Gastrocnemius medialis (tissue), 4 donors: ENCODE measurements at regions of chr7 and their contacts with region 1.

Region 1: GRCh38 chr7:65037740-65038678 is 31.5 kb upstream of the ERV3-1 start:
- DNase-seq: peak; percentile 90 to 92
- ATAC-seq: peak; percentile 89 to 90
- H3K4me3 ChIP-seq: peak overlapping the region; percentile 70 to 93 (median 82)
- H3K27ac ChIP-seq: peak overlapping the region; percentile 87 to 97 (median 95)
- H3K4me1 ChIP-seq: peaks cover 19% of the 10 kb centered on the region in 2 donors
- H3K27me3 ChIP-seq: no peaks in the 10 kb centered on the region
- CTCF ChIP-seq: no peak
- POLR2A ChIP-seq: peak; percentile 56 to 71

Region 2: DNA sequence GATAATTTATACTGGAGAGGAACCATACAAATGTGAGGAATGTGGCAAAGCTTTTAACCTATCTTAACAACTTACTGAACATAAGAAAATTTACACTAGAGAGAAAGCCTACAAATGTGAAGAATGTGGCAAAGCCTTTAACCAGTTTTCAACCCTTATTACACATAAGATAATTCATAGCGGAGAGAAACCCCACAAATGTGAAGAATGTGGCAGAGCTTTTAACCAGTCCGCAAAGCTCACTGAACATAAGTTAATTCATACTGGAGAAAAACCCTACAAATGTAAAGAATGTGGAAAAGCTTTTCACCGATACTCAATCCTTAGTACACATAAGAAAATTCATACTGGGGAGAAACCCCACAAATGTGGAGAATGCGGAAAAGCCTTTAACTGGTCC is 205.9 kb before region 1 on chr7:
- in situ Hi-C with region 1: no loop called
- intact Hi-C with region 1: no loop called
- DNase-seq: no peak
- ATAC-seq: no peak
- H3K4me3 ChIP-seq: no peak overlapping the region
- H3K27ac ChIP-seq: no peak overlapping the region
- H3K4me1 ChIP-seq: no peaks in the 10 kb centered on the region
- H3K27me3 ChIP-seq: no peaks in the 10 kb centered on the region
- CTCF ChIP-seq: no peak
- POLR2A ChIP-seq: no peak

Region 3: DNA sequence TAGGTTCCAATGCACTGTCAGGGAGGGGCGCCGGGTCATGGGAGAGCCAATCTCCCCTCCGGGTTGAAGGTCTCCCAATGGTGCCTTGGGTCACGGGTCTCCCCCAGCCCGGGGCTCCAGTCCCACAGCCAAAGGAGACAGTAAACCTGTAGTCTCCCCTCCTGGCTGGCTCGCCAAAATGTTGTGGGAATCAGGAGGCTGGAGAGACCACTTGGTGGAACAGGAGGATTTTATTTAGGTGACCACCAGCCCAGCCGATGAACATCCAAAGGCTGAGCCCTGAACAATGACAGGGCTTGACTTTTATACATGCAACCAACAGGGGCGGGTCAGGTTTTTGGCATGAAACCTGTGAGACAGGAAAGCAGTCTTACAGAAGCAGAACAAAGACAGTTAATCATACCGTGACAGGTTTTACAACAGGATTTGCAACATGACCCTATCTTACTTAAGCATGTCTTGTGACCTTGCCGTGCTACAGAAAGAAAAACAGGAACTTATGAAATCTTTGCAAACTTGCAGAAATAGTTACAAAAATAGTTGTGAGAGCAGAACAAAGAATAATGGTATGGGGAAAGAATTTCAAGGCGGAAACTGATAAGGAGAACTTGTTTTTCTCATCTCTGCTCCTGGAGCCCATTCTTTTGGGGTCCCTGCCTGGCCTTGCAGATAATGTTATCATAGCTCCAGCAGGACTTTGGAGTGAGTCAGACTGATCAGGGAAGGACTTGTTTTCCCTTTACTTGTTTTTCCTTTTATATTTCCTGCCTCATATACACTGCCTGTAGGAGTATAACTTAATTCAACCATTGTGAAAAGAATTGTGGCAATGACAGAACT is 38.6 kb before region 1 on chr7:
- in situ Hi-C with region 1: no loop called
- intact Hi-C with region 1: loop called (anchors 2 kb)
- DNase-seq: peak; percentile 10 to 72
- ATAC-seq: peak; percentile 76 to 80
- H3K4me3 ChIP-seq: peak overlapping the region in 1 of 4 donors; percentile 27
- H3K27ac ChIP-seq: peak overlapping the region; percentile 59 to 81 (median 73)
- H3K4me1 ChIP-seq: peaks cover 7 to 20% of the 10 kb centered on the region in 2 donors
- H3K27me3 ChIP-seq: no peaks in the 10 kb centered on the region
- CTCF ChIP-seq: no peak
- POLR2A ChIP-seq: peak in 1 of 2 donors; percentile 47

Region 4: DNA sequence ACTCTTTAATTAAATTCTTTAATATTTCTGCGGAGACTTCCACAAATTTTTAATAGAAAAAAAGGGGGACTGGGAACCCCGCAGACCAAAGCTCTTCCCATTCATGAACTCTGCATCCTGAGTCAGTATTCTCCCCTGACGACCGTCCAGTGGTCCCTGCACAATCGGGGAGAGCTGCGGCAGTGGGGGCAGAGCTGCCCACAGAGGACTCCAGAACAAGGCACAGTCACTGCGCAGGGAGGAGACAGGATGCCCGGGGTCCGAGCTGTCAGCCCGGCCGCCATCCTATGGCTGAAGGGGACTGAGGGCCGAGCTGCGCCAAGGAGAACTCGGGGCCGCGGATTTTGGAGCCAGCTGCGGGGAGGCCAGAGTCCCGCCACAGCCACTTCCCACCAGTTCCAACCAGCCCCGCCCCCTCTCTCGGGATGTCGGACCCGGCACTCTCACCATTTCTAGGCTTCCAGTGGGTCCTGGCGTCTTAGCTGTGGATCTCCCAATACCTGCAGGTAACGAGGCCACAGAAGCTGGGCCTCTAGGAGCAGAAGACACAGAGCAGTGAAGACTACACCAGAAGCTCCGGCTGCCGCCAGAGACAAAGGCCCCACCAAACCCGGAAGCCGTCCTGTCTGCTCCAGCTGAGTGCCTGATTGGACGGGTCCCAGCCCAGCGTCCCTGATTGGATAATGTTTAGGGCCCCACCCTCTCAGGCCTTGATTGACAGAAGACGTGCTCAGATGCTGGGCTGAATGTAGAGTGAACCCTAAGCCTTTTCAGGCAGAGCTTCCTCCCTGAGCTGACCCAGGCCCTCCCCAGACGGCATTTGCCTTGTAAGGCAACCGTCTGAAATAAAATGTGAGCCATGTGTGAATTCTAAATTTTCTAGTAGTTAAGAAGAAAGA is 31.7 kb before region 1 on chr7 and contains the start of gene ERV3-1:
- in situ Hi-C with region 1: no loop called
- intact Hi-C with region 1: loop called (anchors 1 kb)
- DNase-seq: peak; percentile 95
- ATAC-seq: peak; percentile 100
- H3K4me3 ChIP-seq: peak within 1 kb of the TSS; percentile 55 to 98 (median 91)
- H3K27ac ChIP-seq: peak within 1 kb of the TSS; percentile 76 to 89 (median 86)
- H3K4me1 ChIP-seq: peaks cover 12 to 18% of the 10 kb centered on the region in 2 donors
- H3K27me3 ChIP-seq: no peaks in the 10 kb centered on the region
- CTCF ChIP-seq: no peak
- POLR2A ChIP-seq: peak; percentile 89 to 90
- total RNA-seq, gene ERV3-1: 0.49 to 3.9 (median 2.9) TPM

Region 5: GRCh38 chr7:65373608-65374351 is 335.8 kb after region 1 on chr7 and contains the start of gene ZNF92:
- in situ Hi-C with region 1: no loop called
- intact Hi-C with region 1: loop called (anchors 5 kb)
- DNase-seq: peak; percentile 95 to 96
- ATAC-seq: peak; percentile 100
- H3K4me3 ChIP-seq: peak within 1 kb of the TSS; percentile 91 to 97 (median 96)
- H3K27ac ChIP-seq: peak within 1 kb of the TSS; percentile 87 to 89 (median 88)
- H3K4me1 ChIP-seq: peaks cover 10 to 14% of the 10 kb centered on the region in 2 donors
- H3K27me3 ChIP-seq: no peaks in the 10 kb centered on the region
- CTCF ChIP-seq: no peak
- POLR2A ChIP-seq: peak; percentile 69 to 88
- total RNA-seq, gene ZNF92: 1.8 to 3.4 (median 2.6) TPM